Left cardiac atrium (tissue), 4 donors: ENCODE measurements at regions of chr1 and their contacts with region 1.

Region 1: GRCh38 chr1:176559878-176560277 is 96.9 kb downstream of the PAPPA2 start:
- DNase-seq: peak; percentile 46
- ATAC-seq: peak; percentile 93 to 97

Region 2: GRCh38 chr1:176374967-176375569 is 184.8 kb before region 1 on chr1:
- intact Hi-C with region 1: loop called (anchors 10 kb)
- DNase-seq: peak; percentile 71
- ATAC-seq: peak; percentile 73 to 76

Region 3: GRCh38 chr1:176843352-176844297 is 283.7 kb after region 1 on chr1:
- intact Hi-C with region 1: loop called (anchors 2 to 5 kb)
- DNase-seq: no peak
- ATAC-seq: peak; percentile 48 to 81

Region 4: DNA sequence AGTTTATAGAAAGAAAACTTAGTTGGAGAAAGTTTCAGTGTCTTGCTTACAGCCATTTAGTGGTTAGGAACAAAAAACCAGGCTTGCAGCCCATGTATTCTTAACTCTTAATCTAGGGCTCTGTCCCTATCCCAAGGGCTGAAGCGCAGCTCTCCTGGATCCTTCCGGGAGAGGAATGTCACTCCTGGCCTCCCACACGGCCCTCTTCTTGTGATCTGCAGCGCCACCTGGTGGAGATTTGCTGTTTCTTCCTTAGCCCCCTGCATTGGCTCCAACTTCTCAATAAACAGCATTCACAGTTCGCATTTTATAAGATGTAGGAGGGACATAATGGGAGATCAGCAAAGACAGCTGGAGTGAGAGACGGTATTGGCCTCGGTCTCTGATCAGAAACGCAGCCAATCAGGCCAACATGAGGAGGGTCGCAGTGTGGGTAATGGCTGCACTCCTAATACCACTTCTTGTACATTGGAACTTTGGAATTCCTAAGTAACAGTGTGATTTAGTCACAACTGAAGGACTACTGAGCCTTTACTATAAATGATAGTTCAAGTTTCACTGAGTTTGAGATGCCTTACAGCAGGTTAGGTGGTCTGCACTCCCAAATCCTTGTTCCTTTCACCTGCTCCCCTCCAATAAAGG is 321.2 kb after region 1 on chr1:
- intact Hi-C with region 1: loop called (anchors 2 kb)
- DNase-seq: peak; percentile 70
- ATAC-seq: peak; percentile 88